Right cardiac atrium (tissue), 5 donors: ENCODE measurements at regions of chr17 and their contacts with region 1.

Region 1: DNA sequence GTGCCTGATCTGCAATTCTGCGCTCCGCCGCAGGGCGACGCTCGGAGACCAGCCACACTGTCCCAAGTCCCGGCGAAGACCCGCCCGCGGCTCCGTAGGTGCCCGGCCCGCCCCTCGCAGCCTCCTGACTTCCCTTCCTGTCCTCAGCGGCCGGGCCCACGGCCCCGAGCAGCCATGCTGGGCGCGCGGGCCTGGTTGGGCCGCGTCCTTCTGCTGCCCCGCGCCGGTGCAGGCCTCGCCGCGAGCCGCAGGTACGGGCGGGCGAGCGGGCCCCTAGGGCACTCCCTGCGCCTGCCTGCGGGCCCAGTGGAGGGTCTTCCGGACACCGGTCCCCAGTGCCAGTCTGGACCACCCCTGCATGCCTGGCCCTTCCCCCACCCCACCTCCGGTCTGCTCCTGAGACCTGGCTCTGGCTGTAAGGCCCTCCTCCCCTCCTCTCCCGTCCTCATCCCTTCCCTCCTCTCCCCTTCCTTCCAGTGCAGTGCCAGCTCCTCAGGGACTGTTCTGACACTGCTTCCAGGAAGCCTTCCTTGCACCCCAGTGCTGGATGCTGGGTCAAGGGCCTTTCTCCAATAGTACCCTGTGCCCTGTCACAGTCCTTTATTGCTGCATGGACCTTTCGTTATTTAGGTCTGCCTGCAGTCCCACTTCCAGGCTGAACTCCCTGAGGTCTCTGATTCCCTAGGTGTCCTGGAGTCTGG is at the start of gene SPATA20:
- DNase-seq: peak; percentile 92 to 98 (median 97)
- ATAC-seq: peak; percentile 87 to 90
- H3K4me3 ChIP-seq: peak within 1 kb of the TSS; percentile 60
- H3K27ac ChIP-seq: peak within 1 kb of the TSS; percentile 52
- H3K4me1 ChIP-seq: peaks cover 4% of the 10 kb centered on the region
- H3K27me3 ChIP-seq: no peaks in the 10 kb centered on the region
- total RNA-seq, gene SPATA20: 45.9 to 71.8 (median 52.6) TPM

Region 2: GRCh38 chr17:50596191-50597037 is 49.2 kb after region 1 on chr17:
- intact Hi-C with region 1: no loop called
- DNase-seq: peak; percentile 53 to 84 (median 78)
- ATAC-seq: peak; percentile 32 to 39
- H3K4me3 ChIP-seq: no peak overlapping the region
- H3K27ac ChIP-seq: no peak overlapping the region
- H3K4me1 ChIP-seq: no peaks in the 10 kb centered on the region
- H3K27me3 ChIP-seq: no peaks in the 10 kb centered on the region

Region 3: DNA sequence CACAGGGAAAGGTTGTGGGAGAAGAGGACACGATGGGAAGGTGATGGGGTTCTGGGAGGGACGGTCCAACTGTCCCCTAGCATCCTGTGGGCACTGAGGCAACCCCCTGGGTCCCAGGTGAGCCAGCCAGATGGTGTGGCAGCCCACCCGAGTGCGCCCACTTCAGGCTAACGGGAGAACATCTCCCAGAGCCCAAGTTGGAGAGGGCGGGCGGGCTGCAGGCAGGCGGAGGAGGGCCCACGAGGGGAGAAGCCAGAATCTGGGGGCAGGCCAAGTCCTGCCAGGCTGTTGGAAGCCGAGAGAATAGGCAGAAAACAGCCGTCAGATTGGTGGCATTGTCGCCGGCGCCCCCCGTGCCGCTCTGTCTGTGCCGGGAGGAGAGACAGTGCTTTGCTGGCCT is 73.7 kb after region 1 on chr17:
- intact Hi-C with region 1: loop called (anchors 5 kb)
- DNase-seq: peak in 2 of 3 donors; percentile 28 to 34
- ATAC-seq: no peak
- H3K4me3 ChIP-seq: no peak overlapping the region
- H3K27ac ChIP-seq: no peak overlapping the region
- H3K4me1 ChIP-seq: no peaks in the 10 kb centered on the region
- H3K27me3 ChIP-seq: no peaks in the 10 kb centered on the region

Region 4: GRCh38 chr17:50675627-50676026 is 128.4 kb after region 1 on chr17:
- intact Hi-C with region 1: loop called (anchors 5 kb)
- DNase-seq: no peak
- ATAC-seq: no peak
- H3K4me3 ChIP-seq: no peak overlapping the region
- H3K27ac ChIP-seq: no peak overlapping the region
- H3K4me1 ChIP-seq: no peaks in the 10 kb centered on the region
- H3K27me3 ChIP-seq: no peaks in the 10 kb centered on the region

Region 5: GRCh38 chr17:50834429-50835300 is 287.5 kb after region 1 on chr17:
- intact Hi-C with region 1: loop called in 2 of 4 experiments (anchors 5 to 10 kb)
- DNase-seq: peak in 1 of 3 donors; percentile 81
- ATAC-seq: peak; percentile 25 to 40
- H3K4me3 ChIP-seq: peak overlapping the region; percentile 25
- H3K27ac ChIP-seq: no peak overlapping the region
- H3K4me1 ChIP-seq: peaks cover 4% of the 10 kb centered on the region
- H3K27me3 ChIP-seq: no peaks in the 10 kb centered on the region